ENCODE measurements at regions of chr19 and their contacts with region 1.

Region 1: DNA sequence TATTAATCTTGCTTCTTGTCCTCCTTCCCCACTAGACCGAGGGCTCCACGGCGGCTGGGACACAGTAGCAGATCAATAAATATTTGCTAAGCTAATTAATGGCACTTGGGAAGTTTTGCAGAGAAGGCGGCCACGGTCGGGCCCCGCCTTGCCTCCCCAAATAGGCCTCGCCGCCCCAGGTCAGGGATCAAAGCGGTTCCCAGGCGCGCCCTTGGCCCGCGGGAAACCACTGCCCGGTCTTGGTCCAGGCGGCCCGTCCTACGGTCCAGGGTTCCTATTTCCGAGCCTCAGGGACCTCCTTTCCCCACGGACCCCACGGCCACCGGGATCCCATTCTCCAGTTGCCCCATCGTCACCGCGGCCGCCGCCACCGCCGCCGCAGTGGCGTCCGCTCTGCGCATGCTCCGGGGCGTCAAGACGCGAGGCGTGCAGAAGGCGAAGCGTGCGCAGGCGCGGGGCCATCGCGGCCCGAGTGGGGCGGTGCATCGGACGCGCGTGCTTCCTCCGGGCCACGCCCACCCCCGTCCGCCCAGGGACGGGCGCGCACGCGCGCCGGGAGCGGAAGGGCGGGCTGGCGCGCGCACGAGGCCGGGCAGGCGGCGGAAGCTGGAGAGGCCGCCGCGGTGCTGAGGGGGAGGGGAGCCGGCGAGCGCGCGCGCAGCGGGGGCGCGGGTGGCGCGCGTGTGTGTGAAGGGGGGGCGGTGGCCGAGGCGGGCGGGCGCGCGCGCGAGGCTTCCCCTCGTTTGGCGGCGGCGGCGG is at the start of gene SMARCA4:
- DNase-seq: peak; percentile 97
- H3K4me3 Mint-ChIP-seq: peak within 1 kb of the TSS; percentile 91
- H3K27ac Mint-ChIP-seq: peak within 1 kb of the TSS; percentile 90
- H3K4me1 Mint-ChIP-seq: peaks cover 37% of the 10 kb centered on the region
- H3K27me3 Mint-ChIP-seq: no peaks in the 10 kb centered on the region
- total RNA-seq, gene SMARCA4: 88.6 to 98.6 TPM

Region 2: GRCh38 chr19:10332955-10333757 is 627.3 kb before region 1 on chr19 and contains the start of gene RAVER1:
- CTCF ChIA-PET with region 1: no interaction called
- intact Hi-C with region 1: loop called (anchors 10 kb)
- DNase-seq: peak; percentile 99
- H3K4me3 Mint-ChIP-seq: peak within 1 kb of the TSS; percentile 94
- H3K27ac Mint-ChIP-seq: peak within 1 kb of the TSS; percentile 96
- H3K4me1 Mint-ChIP-seq: peaks cover 36% of the 10 kb centered on the region
- H3K27me3 Mint-ChIP-seq: no peaks in the 10 kb centered on the region
- total RNA-seq, gene RAVER1: 63.0 to 69.0 TPM

Region 3: GRCh38 chr19:10870955-10871603 is 89.4 kb before region 1 on chr19 and contains the start of gene CARM1:
- CTCF ChIA-PET with region 1: no interaction called
- intact Hi-C with region 1: loop called (anchors 1 kb)
- DNase-seq: peak; percentile 99
- H3K4me3 Mint-ChIP-seq: peak within 1 kb of the TSS; percentile 85
- H3K27ac Mint-ChIP-seq: peak within 1 kb of the TSS; percentile 93
- H3K4me1 Mint-ChIP-seq: peaks cover 31% of the 10 kb centered on the region
- H3K27me3 Mint-ChIP-seq: no peaks in the 10 kb centered on the region
- total RNA-seq, gene CARM1: 88.4 to 89.3 TPM

Region 4: GRCh38 chr19:10928525-10929401 is 31.7 kb before region 1 on chr19 and contains the starts of genes TIMM29 and YIPF2:
- CTCF ChIA-PET with region 1: interaction called, 3 read pairs
- intact Hi-C with region 1: loop called (anchors 1 kb)
- DNase-seq: peak; percentile 98
- H3K4me3 Mint-ChIP-seq: peak within 1 kb of the TSS; percentile 94
- H3K27ac Mint-ChIP-seq: peak within 1 kb of the TSS; percentile 67
- H3K4me1 Mint-ChIP-seq: peaks cover 31% of the 10 kb centered on the region
- H3K27me3 Mint-ChIP-seq: no peaks in the 10 kb centered on the region
- total RNA-seq, gene TIMM29: 11.0 to 12.7 TPM
- total RNA-seq, gene YIPF2: 22.7 to 25.4 TPM

Region 5: DNA sequence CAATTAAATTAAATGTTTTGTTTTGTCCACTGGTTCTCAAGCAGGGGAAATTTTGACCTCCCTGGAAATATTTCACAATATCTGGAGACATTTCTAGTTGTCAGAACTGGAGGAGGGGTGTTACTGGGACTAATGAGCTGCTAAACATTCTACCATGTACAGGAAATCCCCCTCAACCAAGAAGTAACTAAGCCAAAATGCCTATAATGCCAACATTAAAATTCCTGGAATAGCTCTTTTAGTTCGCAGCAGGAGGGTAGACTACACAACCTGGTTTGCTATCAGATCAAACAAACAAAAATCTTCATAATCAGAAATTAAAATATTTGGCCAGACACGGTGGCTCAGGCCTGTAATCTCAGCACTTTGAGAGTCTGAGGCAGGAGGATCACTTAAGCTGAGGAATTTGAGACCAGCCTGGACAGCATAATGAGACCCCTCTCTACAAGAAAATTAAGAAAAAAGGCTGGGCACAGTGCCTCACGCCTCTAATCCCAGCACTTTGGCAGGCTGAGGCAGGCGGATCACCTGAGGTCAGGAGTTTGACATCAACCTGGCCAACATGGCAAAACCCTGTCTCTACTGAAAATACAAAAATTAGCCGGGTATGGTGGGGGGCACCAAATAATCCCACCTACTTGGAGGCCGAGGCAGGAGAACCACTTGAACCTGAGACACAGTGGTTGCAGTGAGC is 13.4 kb before region 1 on chr19:
- CTCF ChIA-PET with region 1: interaction called, 14 read pairs
- intact Hi-C with region 1: loop called (anchors 1 kb)
- DNase-seq: no peak
- H3K4me3 Mint-ChIP-seq: no peak overlapping the region
- H3K27ac Mint-ChIP-seq: no peak overlapping the region
- H3K4me1 Mint-ChIP-seq: peaks cover 3% of the 10 kb centered on the region
- H3K27me3 Mint-ChIP-seq: no peaks in the 10 kb centered on the region

Region 6: GRCh38 chr19:10979951-10980381 is 19.5 kb after region 1 on chr19:
- CTCF ChIA-PET with region 1: no interaction called
- intact Hi-C with region 1: no loop called
- DNase-seq: peak; percentile 60
- H3K4me3 Mint-ChIP-seq: no peak overlapping the region
- H3K27ac Mint-ChIP-seq: peak overlapping the region; percentile 59
- H3K4me1 Mint-ChIP-seq: peaks cover 25% of the 10 kb centered on the region
- H3K27me3 Mint-ChIP-seq: no peaks in the 10 kb centered on the region

Region 7: DNA sequence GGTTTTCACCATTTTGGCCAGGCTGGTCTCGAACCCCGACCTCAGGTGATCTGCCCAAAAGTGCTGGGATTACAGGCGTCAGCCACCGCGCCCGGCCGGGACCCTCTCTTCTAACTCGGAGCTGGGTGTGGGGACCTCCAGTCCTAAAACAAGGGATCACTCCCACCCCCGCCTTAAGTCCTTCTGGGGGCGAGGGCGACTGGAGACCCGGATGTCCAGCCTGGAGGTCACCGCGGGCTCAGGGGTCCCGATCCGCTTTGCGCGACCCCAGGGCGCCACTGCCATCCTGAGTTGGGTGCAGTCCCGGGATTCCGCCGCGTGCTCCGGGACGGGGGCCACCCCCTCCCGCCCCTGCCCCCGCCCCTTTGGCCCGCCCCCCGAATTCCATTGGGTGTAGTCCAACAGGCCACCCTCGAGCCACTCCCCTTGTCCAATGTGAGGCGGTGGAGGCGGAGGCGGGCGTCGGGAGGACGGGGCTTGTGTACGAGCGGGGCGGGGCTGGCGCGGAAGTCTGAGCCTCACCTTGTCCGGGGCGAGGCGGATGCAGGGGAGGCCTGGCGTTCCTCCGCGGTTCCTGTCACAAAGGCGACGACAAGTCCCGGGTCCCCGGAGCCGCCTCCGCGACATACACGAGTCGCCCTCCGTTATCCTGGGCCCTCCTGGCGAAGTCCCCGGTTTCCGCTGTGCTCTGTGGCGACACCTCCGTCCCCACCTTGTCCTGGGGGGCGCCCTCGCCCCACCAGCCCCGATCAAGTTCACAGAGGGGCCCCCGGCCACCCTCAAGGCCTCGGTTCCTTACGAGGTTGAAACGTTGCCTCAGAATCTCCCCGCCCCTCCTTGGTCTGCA is 129.8 kb after region 1 on chr19:
- CTCF ChIA-PET with region 1: interaction called, 4 read pairs
- intact Hi-C with region 1: loop called (anchors 1 kb)
- DNase-seq: peak; percentile 99
- H3K4me3 Mint-ChIP-seq: peak overlapping the region; percentile 94
- H3K27ac Mint-ChIP-seq: peak overlapping the region; percentile 99
- H3K4me1 Mint-ChIP-seq: peaks cover 48% of the 10 kb centered on the region
- H3K27me3 Mint-ChIP-seq: no peaks in the 10 kb centered on the region